ENCODE measurements at regions of chr2 and their contacts with region 1.

Region 1: GRCh38 chr2:39379643-39380524 is 57.2 kb downstream of the MAP4K3 start:
- DNase-seq: no peak
- H3K4me3 ChIP-seq: peak overlapping the region; percentile 21
- H3K27ac ChIP-seq: peak overlapping the region; percentile 83
- H3K4me1 ChIP-seq: peaks cover 66% of the 10 kb centered on the region
- H3K27me3 ChIP-seq: no peaks in the 10 kb centered on the region
- CTCF ChIP-seq: peak; percentile 75

Region 2: GRCh38 chr2:39436592-39437510 is 57.0 kb after region 1 on chr2 and contains the start of gene MAP4K3:
- intact Hi-C with region 1: loop called (anchors 5 kb)
- DNase-seq: peak; percentile 95
- H3K4me3 ChIP-seq: peak within 1 kb of the TSS; percentile 95
- H3K27ac ChIP-seq: peak within 1 kb of the TSS; percentile 99
- H3K4me1 ChIP-seq: peaks cover 77% of the 10 kb centered on the region
- H3K27me3 ChIP-seq: no peaks in the 10 kb centered on the region
- CTCF ChIP-seq: no peak
- total RNA-seq, gene MAP4K3: 37.1 TPM

Region 3: GRCh38 chr2:39492095-39492590 is 112.3 kb after region 1 on chr2:
- intact Hi-C with region 1: loop called (anchors 10 kb)
- DNase-seq: no peak
- H3K4me3 ChIP-seq: peak overlapping the region; percentile 5
- H3K27ac ChIP-seq: peak overlapping the region; percentile 72
- H3K4me1 ChIP-seq: peaks cover 45% of the 10 kb centered on the region
- H3K27me3 ChIP-seq: no peaks in the 10 kb centered on the region
- CTCF ChIP-seq: no peak

Region 4: DNA sequence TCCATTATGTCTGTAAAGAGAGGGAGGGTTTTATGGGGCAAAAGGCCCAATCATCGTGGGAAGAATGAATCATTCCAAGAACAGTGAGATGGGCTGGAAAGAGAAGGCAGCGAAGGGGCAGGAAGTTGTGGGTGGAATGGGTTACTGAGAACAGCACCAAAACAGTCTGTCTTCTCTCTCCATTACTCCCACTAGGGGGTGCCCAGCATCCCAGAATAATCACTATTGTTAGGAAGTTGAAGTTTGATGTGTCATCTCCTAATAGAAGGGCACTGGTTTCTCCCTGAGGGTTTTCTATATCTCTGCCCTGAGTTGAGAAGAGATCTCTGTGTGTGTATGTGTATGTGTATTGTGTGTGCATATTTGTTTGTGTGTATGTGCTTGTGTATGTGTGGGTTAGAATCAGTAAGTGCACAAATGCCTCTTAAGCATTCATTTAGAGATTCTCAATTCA is 133.8 kb after region 1 on chr2:
- intact Hi-C with region 1: loop called (anchors 5 kb)
- DNase-seq: peak; percentile 24
- H3K4me3 ChIP-seq: no peak overlapping the region
- H3K27ac ChIP-seq: peak overlapping the region; percentile 85
- H3K4me1 ChIP-seq: peaks cover 100% of the 10 kb centered on the region
- H3K27me3 ChIP-seq: no peaks in the 10 kb centered on the region
- CTCF ChIP-seq: peak; percentile 68

Region 5: GRCh38 chr2:39696838-39697237 is 317.0 kb after region 1 on chr2:
- intact Hi-C with region 1: loop called (anchors 10 kb)
- DNase-seq: no peak
- H3K4me3 ChIP-seq: peak overlapping the region; percentile 5
- H3K27ac ChIP-seq: peak overlapping the region; percentile 76
- H3K4me1 ChIP-seq: peaks cover 31% of the 10 kb centered on the region
- H3K27me3 ChIP-seq: no peaks in the 10 kb centered on the region
- CTCF ChIP-seq: peak; percentile 65